HCT116 (cell line): ENCODE measurements at regions of chr2 and their contacts with region 1.

Region 1: DNA sequence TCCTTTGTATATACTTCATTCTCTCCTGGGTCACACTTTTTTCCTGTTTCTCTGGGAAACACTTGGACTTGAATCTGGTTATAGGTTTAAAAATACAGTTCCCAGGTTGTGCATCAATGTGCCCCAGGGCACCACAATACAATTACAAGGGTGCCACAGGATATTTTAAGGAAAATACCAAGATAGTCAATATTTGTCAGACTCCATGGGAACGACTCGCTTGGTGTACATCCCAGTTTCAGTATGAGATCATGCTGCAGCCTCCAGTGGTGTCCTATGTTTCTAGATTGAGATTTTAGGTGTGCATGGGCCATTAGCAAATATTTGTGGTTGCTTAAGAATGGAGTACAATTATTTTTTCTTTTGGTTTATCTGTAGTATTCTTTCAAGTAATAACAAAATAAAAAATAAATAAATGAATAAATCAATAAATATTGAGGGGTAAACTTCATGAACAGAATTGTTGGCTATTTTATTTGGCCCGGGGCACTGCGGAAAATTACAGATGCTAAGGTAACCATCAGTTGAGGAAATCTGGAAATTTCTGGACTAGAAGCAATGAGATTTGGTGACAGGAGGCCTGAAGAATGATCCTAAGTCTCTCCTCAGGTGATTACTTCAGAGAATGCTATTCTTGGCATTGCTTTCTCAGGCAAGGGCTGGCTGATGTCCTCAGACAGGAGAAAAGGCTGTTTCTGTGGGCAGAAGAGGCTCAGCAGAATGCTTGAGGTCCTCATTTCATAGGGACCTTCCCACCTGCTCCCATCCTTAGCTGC is 649.3 kb upstream of the SOX11 start:
- DNase-seq: no peak
- ATAC-seq: no peak
- H3K4me3 ChIP-seq: no peak overlapping the region
- H3K27ac ChIP-seq: no peak overlapping the region
- H3K4me1 ChIP-seq: no peaks in the 10 kb centered on the region
- H3K27me3 ChIP-seq: no peaks in the 10 kb centered on the region
- CTCF ChIP-seq: no peak
- POLR2A ChIP-seq: no peak
- RAD21 ChIP-seq: no peak

Region 2: GRCh38 chr2:4291430-4291829 is 751.4 kb before region 1 on chr2:
- CTCF ChIA-PET with region 1: no interaction called
- POLR2A ChIA-PET with region 1: no interaction called
- RAD21 ChIA-PET with region 1: no interaction called
- intact Hi-C with region 1: loop called (anchors 10 kb)
- DNase-seq: no peak
- ATAC-seq: no peak
- H3K4me3 ChIP-seq: no peak overlapping the region
- H3K27ac ChIP-seq: no peak overlapping the region
- H3K4me1 ChIP-seq: no peaks in the 10 kb centered on the region
- H3K27me3 ChIP-seq: no peaks in the 10 kb centered on the region
- CTCF ChIP-seq: no peak
- POLR2A ChIP-seq: no peak
- RAD21 ChIP-seq: no peak

Region 3: DNA sequence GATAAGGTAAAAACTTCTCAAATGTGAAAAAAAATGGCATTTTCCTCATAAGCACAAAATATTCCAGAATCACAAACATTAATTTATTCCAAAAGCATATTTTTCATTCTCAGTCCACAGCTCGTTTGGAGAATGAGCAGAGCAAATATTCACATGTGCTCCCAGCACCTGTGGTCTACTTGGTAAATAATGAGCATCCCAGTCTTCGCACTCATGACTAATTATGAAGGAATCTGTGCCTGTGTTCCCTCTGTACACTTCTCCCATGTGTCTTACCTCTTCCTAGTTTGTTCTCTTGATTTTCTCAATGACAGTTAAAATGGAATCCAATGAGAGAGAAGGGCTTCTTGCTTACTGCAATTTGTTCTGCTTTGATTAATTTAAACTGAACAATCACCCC is 21.7 kb before region 1 on chr2:
- CTCF ChIA-PET with region 1: no interaction called
- POLR2A ChIA-PET with region 1: no interaction called
- RAD21 ChIA-PET with region 1: no interaction called
- intact Hi-C with region 1: no loop called
- DNase-seq: no peak
- ATAC-seq: no peak
- H3K4me3 ChIP-seq: no peak overlapping the region
- H3K27ac ChIP-seq: no peak overlapping the region
- H3K4me1 ChIP-seq: no peaks in the 10 kb centered on the region
- H3K27me3 ChIP-seq: no peaks in the 10 kb centered on the region
- CTCF ChIP-seq: no peak
- POLR2A ChIP-seq: no peak
- RAD21 ChIP-seq: no peak